Panc1 (cell line): ENCODE measurements at regions of chr11 and their contacts with region 1.

Region 1: GRCh38 chr11:131748151-131749050 is 378.0 kb downstream of the NTM start:
- DNase-seq: no peak
- ATAC-seq: peak; percentile 89
- H3K4me3 ChIP-seq: no peak overlapping the region
- H3K27ac ChIP-seq: no peak overlapping the region
- H3K4me1 ChIP-seq: no peaks in the 10 kb centered on the region
- H3K27me3 ChIP-seq: peaks cover 5% of the 10 kb centered on the region; the same call in 1 of the 2 replicates
- CTCF ChIP-seq: peak; percentile 94

Region 2: DNA sequence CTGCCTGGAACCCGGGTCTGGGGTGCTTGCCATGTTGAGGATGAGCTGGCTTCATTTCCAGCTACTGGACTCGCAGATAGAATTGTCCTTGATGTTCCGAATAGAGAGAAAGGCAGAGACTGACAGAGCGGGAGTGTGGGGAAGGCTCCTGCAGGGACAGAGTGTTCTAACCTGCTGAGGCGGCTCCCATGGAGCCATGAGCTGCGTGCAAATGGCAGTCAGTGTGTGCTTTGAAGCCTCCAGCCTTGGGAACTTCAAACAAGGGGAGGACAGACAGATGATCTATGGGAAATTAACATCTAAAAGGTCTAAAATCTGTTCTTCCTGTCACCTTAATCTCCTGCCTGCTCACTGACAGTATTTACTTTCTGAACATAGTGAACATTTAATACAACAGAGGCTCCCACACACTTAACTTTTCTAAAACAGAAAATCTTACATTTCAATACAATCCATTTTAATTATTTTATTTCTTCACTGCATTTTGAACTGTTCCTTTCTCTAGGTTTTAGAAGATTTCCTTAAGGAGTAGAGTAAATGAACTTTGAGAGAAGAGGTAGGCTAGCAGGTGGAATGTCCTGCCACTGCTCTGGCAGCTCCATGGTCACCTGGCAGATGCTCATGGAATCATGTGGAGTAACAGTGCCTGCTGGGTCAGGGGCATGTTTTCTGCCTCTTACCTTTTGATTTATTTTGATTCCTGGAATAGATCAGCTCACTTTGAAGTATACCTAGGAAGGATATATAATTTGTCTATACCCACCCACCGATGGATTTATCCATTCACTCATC is 103.8 kb after region 1 on chr11:
- CTCF ChIA-PET with region 1: no interaction called
- POLR2A ChIA-PET with region 1: no interaction called
- in situ Hi-C with region 1: no loop called
- intact Hi-C with region 1: no loop called
- DNase-seq: no peak
- ATAC-seq: no peak
- H3K4me3 ChIP-seq: no peak overlapping the region
- H3K27ac ChIP-seq: no peak overlapping the region
- H3K4me1 ChIP-seq: no peaks in the 10 kb centered on the region
- H3K27me3 ChIP-seq: no peaks in the 10 kb centered on the region; the same call in none of the 2 replicates
- CTCF ChIP-seq: no peak

Region 3: DNA sequence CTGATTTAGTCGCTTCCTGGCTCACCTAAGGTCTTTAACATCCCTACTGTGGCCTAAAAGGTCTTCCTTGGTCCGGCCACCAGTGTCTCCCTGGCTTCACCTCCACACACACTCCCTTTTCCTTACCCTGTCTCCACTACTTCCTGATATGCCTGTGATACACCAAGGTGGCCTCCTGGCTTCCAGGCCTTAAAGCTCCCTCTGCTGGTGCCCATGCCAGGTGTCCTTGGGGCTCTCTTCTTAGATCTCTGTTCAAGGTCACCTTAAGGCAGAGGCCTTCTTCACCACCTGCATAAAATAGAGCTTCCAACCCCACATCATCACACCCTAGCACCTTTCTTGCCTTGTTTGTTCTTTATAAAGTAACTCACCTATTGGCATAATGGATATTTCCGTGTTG is 409.7 kb after region 1 on chr11:
- CTCF ChIA-PET with region 1: no interaction called
- POLR2A ChIA-PET with region 1: no interaction called
- in situ Hi-C with region 1: no loop called
- intact Hi-C with region 1: loop called (anchors 10 kb)
- DNase-seq: peak; percentile 22
- ATAC-seq: peak; percentile 82
- H3K4me3 ChIP-seq: no peak overlapping the region
- H3K27ac ChIP-seq: no peak overlapping the region
- H3K4me1 ChIP-seq: no peaks in the 10 kb centered on the region
- H3K27me3 ChIP-seq: no peaks in the 10 kb centered on the region
- CTCF ChIP-seq: peak; percentile 72